K562 (cell line): ENCODE measurements at regions of chr5 and their contacts with region 1.

Region 1: DNA sequence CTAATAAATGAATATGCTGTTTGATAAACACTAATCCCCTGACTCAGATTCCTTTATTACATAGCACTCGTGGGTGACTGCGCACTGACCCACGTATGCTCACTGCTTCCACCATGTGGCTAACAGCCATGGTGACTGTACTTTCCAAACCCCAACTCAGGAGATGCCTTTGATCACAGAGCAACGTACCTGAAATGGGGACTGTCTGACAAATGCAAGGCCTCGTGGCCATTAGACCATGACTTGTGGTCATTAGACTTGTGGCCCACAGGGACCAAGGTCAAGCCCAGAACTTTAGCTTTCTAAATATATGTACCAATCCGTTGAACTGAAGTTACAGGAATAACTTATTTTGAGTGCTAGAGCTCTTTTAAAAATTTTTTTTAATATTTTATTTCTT is 46.6 kb downstream of the CYFIP2 start:
- DNase-seq: peak; percentile 49 to 60 (median 56)
- ATAC-seq: peak; percentile 94
- H3K4me3 ChIP-seq: no peak overlapping the region
- H3K27ac ChIP-seq: no peak overlapping the region
- H3K4me1 ChIP-seq: no peaks in the 10 kb centered on the region
- H3K27me3 ChIP-seq: peaks cover 15 to 33% of the 10 kb centered on the region in 2 experiments
- CTCF ChIP-seq: peak; percentile 66 to 75 (median 70)
- EP300 ChIP-seq: no peak
- POLR2A ChIP-seq: no peak
- RAD21 ChIP-seq: peak; percentile 75 to 81

Region 2: DNA sequence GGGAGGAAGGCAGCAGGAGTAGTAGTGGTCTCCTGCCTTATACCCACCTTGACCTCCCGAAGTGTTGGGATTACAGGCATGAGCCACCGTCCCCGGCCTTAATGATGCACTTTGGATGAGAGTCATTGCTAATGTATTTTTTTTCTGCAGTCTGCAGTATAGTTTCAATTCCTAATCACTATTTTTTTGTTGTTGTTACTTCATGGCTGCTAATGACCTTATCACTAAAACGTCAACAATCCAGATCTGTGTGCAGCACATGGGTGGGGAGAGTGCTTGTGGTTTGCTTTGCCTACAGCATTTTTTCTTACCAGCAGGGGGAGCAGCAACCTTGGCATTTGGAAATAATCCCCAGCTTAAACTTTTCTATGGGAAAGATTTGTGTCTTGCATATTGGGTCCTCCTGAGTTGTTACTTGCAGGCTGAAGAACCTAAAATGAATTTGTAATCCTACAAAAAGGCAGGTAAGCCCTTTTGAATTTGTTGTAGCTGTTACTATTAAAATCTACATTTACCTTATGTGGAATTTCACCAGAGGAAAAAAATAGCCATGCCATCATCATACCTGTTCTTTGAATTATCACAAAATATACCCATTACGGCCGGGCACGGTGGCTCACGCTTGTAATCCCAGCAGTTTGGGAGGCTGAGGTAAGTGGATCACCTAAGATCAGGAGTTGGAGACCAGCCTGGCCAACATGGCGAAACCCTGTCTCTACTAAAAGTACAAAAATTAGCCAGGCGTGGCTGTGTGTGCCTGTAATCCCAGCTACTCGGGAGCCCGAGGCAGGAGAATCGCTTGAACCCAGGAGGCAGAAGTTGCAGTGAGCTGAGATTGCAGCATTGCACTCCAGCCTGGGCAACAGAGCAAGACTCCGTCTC is 163.5 kb before region 1 on chr5:
- CTCF ChIA-PET with region 1: interaction called, 4 read pairs
- POLR2A ChIA-PET with region 1: no interaction called
- in situ Hi-C with region 1: no loop called
- intact Hi-C with region 1: loop called (anchors 2 kb)
- DNase-seq: peak; percentile 71 to 79 (median 74)
- ATAC-seq: peak; percentile 95
- H3K4me3 ChIP-seq: no peak overlapping the region
- H3K27ac ChIP-seq: no peak overlapping the region
- H3K4me1 ChIP-seq: peaks cover 0 to 5% of the 10 kb centered on the region in 2 experiments; a peak in 3 of 5 replicates
- H3K27me3 ChIP-seq: no peaks in the 10 kb centered on the region; a peak in 1 of 5 replicates
- CTCF ChIP-seq: peak; percentile 75 to 89 (median 83)
- EP300 ChIP-seq: no peak
- POLR2A ChIP-seq: no peak
- RAD21 ChIP-seq: peak; percentile 76 to 79

Region 3: GRCh38 chr5:157253547-157253946 is 58.9 kb before region 1 on chr5:
- CTCF ChIA-PET with region 1: interaction called, 26 read pairs
- POLR2A ChIA-PET with region 1: no interaction called
- in situ Hi-C with region 1: no loop called
- intact Hi-C with region 1: loop called (anchors 1 kb)
- DNase-seq: peak; percentile 41 to 66 (median 59)
- ATAC-seq: peak; percentile 87
- H3K4me3 ChIP-seq: no peak overlapping the region
- H3K27ac ChIP-seq: no peak overlapping the region
- H3K4me1 ChIP-seq: no peaks in the 10 kb centered on the region
- H3K27me3 ChIP-seq: peaks cover 0 to 5% of the 10 kb centered on the region in 2 experiments; a peak in 1 of 5 replicates
- CTCF ChIP-seq: peak; percentile 73 to 91 (median 80)
- EP300 ChIP-seq: no peak
- POLR2A ChIP-seq: no peak
- RAD21 ChIP-seq: peak; percentile 90 to 93

Region 4: DNA sequence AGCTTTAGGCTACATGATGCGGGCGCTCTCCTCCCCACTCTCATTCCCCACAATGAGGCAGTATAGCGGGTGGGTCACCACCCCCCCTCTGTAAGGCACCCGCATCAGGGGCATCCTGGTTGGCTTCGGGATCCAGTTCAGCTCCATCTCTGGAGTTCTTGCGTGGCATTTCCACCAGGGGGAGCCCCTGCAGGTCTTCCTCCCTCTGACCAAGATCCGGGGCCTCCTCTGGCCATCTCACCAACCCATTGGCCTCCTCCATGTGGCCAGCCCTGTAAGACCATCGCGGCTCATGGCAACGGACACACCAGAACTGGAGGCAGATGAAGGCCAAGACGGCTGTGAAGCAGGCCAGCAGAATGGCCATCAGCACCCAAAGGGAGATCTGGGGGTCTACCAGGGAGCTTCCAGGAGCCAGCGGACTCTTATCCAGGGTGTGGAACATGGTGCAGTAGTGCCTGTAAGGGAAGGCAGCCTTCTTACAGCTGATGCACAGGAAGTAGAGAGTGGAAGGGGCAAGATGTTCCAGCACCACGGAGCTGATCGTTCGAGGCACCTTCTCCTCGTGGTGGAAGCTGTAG is 30.4 kb after region 1 on chr5:
- CTCF ChIA-PET with region 1: no interaction called
- POLR2A ChIA-PET with region 1: no interaction called
- in situ Hi-C with region 1: no loop called
- intact Hi-C with region 1: no loop called
- DNase-seq: peak; percentile 49 to 61 (median 52)
- ATAC-seq: peak; percentile 92
- H3K4me3 ChIP-seq: no peak overlapping the region
- H3K27ac ChIP-seq: no peak overlapping the region
- H3K4me1 ChIP-seq: no peaks in the 10 kb centered on the region
- H3K27me3 ChIP-seq: peaks cover 6 to 15% of the 10 kb centered on the region in 2 experiments; a peak in 4 of 5 replicates
- CTCF ChIP-seq: peak; percentile 67 to 75 (median 67)
- EP300 ChIP-seq: no peak
- POLR2A ChIP-seq: no peak
- RAD21 ChIP-seq: peak; percentile 41 to 57

Region 5: GRCh38 chr5:158224253-158224652 is 911.8 kb after region 1 on chr5:
- CTCF ChIA-PET with region 1: no interaction called
- POLR2A ChIA-PET with region 1: no interaction called
- in situ Hi-C with region 1: no loop called
- intact Hi-C with region 1: no loop called
- DNase-seq: no peak
- ATAC-seq: no peak
- H3K4me3 ChIP-seq: no peak overlapping the region
- H3K27ac ChIP-seq: no peak overlapping the region
- H3K4me1 ChIP-seq: no peaks in the 10 kb centered on the region
- H3K27me3 ChIP-seq: no peaks in the 10 kb centered on the region
- CTCF ChIP-seq: no peak
- EP300 ChIP-seq: no peak
- POLR2A ChIP-seq: no peak
- RAD21 ChIP-seq: no peak